Mammary epithelial cell (primary cell): ENCODE measurements at regions of chr16 and their contacts with region 1.

Region 1: DNA sequence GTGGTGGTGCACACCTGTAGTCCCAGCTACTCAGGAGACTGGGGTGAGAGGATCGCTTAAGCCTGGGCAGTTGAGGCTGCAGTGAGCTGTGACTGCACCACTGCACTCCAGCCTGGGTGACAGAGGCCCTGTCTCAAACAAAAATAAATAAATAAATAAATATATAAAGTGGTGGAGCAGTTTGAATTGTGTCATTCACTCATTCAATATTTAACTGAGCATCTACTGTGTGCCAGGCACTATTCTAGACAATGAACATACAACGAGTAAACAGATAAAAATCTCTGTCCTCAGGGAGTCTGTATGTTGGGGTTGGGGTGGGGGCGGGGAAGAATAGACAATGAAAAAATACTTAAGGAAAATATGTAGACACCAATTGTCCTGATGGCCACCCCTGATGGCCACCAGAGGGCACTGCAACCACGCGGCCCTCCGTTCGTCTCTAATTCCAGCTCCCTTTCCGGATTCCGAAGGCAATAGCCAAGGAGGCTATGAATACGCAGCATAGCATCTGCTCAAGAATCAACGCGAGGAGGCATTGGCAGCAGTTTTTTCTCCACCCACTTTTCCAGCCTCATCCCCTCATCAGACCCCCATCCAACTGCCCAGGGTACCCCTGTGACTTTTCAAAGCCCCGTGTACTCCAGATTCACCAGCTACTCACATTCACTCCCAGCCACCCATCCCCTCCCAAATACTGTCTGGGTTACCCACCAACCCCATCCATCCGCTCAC is 21.4 kb downstream of the QPRT start:
- DNase-seq: peak; percentile 77
- H3K4me3 ChIP-seq: no peak overlapping the region
- H3K27ac ChIP-seq: no peak overlapping the region
- H3K4me1 ChIP-seq: no peaks in the 10 kb centered on the region
- H3K27me3 ChIP-seq: no peaks in the 10 kb centered on the region
- CTCF ChIP-seq: peak; percentile 94

Region 2: DNA sequence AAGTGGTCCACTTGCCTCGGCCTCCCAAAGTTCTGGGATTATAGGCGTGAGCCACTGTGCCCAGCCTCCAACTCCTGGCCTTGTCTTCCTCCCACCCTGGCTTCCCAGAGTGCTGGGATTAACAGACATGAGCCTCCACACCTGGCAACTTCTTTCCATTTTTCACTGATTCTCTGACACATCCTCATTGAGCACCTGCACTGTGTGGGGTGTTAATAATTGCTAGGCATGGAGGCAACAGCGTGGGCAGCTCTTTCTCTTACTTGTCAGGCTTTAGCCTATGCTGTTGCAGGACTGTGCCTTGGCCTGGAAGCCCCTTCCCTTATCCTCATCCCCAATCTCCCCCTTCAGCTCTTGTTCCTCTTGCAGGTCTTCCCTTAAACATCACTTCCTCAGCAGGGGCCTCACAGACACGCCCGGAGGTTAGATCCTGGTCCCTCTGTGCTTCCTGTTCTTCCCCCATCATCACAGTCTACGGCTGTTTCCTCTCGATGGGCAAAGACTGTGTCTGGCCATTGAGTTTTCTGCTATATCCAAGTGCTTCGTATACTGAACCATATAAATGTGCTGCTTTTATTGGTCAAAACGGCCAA is 13.6 kb before region 1 on chr16:
- CTCF ChIA-PET with region 1: no interaction called
- dilution Hi-C with region 1: no loop called
- in situ Hi-C with region 1: no loop called
- intact Hi-C with region 1: no loop called
- DNase-seq: no peak
- H3K4me3 ChIP-seq: no peak overlapping the region
- H3K27ac ChIP-seq: no peak overlapping the region
- H3K4me1 ChIP-seq: no peaks in the 10 kb centered on the region
- H3K27me3 ChIP-seq: no peaks in the 10 kb centered on the region
- CTCF ChIP-seq: no peak

Region 3: GRCh38 chr16:29720699-29721098 is 20.3 kb after region 1 on chr16:
- CTCF ChIA-PET with region 1: no interaction called
- dilution Hi-C with region 1: no loop called
- in situ Hi-C with region 1: no loop called
- intact Hi-C with region 1: loop called (anchors 2 kb)
- DNase-seq: no peak
- H3K4me3 ChIP-seq: no peak overlapping the region
- H3K27ac ChIP-seq: no peak overlapping the region
- H3K4me1 ChIP-seq: peaks cover 4% of the 10 kb centered on the region
- H3K27me3 ChIP-seq: no peaks in the 10 kb centered on the region
- CTCF ChIP-seq: no peak

Region 4: GRCh38 chr16:29848420-29849297 is 148.2 kb after region 1 on chr16:
- CTCF ChIA-PET with region 1: interaction called, 11 read pairs
- dilution Hi-C with region 1: no loop called
- in situ Hi-C with region 1: loop called in 1 of 2 experiments (anchors 25 kb)
- intact Hi-C with region 1: loop called (anchors 1 kb)
- DNase-seq: peak; percentile 39
- H3K4me3 ChIP-seq: no peak overlapping the region
- H3K27ac ChIP-seq: no peak overlapping the region
- H3K4me1 ChIP-seq: no peaks in the 10 kb centered on the region
- H3K27me3 ChIP-seq: no peaks in the 10 kb centered on the region
- CTCF ChIP-seq: peak; percentile 86 to 89

Region 5: GRCh38 chr16:29995911-29996772 is 295.7 kb after region 1 on chr16 and contains the start of gene INO80E:
- CTCF ChIA-PET with region 1: no interaction called
- dilution Hi-C with region 1: no loop called
- in situ Hi-C with region 1: no loop called
- intact Hi-C with region 1: loop called (anchors 10 kb)
- DNase-seq: peak; percentile 94
- H3K4me3 ChIP-seq: peak within 1 kb of the TSS; percentile 72 to 96 (median 86)
- H3K27ac ChIP-seq: peak within 1 kb of the TSS; percentile 91
- H3K4me1 ChIP-seq: peaks cover 23% of the 10 kb centered on the region
- H3K27me3 ChIP-seq: no peaks in the 10 kb centered on the region
- CTCF ChIP-seq: no peak
- total RNA-seq, gene INO80E: 27.7 to 62.2 TPM

Region 6: GRCh38 chr16:30010844-30011713 is 310.7 kb after region 1 on chr16 and contains the start of gene DOC2A:
- CTCF ChIA-PET with region 1: no interaction called
- dilution Hi-C with region 1: loop called (anchors 5 kb)
- in situ Hi-C with region 1: loop called in 1 of 2 experiments (anchors 10 kb)
- intact Hi-C with region 1: no loop called
- DNase-seq: no peak
- H3K4me3 ChIP-seq: peak within 1 kb of the TSS; percentile 29 to 38 (median 36)
- H3K27ac ChIP-seq: no peak within 1 kb of the TSS
- H3K4me1 ChIP-seq: peaks cover 7% of the 10 kb centered on the region
- H3K27me3 ChIP-seq: peaks cover 15% of the 10 kb centered on the region
- CTCF ChIP-seq: no peak
- total RNA-seq, gene DOC2A: 0.89 TPM in 1 of 2 donors, not detected in the other

Region 7: DNA sequence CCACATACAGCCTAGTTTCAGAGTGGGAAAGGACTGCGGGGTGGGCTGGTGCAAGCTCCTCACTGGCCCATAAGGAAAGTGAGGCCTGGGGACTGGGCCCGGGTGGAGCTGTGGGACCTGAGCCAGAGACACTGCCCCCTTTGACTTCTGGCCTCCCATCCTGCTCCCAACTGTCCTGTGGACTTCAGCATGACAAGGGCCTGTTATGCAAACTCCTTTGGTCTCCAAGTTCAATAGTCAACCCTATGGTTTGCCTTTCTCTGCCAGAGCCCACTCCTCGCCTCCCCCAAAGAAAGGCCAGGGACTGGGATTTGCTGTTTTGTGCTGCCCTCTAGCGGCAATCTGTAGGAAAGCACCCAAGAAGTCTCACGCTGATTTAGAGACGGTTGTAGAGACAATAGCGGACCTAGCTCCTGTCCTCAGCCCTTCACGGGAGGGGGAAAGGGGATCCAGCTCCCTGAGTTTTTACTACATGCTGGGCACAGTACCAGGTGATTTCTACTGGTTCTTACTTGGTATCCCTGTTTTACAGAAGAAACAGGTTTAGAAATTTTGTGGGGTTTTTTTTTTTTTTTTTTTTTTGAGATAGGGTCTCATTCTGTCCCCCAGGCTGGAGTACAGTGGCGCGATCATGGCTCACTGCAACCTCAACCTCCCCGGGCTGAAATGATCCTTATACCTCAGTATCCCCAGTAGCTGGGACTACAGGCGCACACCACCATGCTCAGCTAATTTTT is 331.8 kb after region 1 on chr16:
- CTCF ChIA-PET with region 1: interaction called, 23 read pairs
- dilution Hi-C with region 1: no loop called
- in situ Hi-C with region 1: loop called in 1 of 2 experiments (anchors 5 kb)
- intact Hi-C with region 1: no loop called
- DNase-seq: peak; percentile 44
- H3K4me3 ChIP-seq: no peak overlapping the region
- H3K27ac ChIP-seq: no peak overlapping the region
- H3K4me1 ChIP-seq: no peaks in the 10 kb centered on the region
- H3K27me3 ChIP-seq: peaks cover 4% of the 10 kb centered on the region
- CTCF ChIP-seq: peak; percentile 68 to 80

Region 8: DNA sequence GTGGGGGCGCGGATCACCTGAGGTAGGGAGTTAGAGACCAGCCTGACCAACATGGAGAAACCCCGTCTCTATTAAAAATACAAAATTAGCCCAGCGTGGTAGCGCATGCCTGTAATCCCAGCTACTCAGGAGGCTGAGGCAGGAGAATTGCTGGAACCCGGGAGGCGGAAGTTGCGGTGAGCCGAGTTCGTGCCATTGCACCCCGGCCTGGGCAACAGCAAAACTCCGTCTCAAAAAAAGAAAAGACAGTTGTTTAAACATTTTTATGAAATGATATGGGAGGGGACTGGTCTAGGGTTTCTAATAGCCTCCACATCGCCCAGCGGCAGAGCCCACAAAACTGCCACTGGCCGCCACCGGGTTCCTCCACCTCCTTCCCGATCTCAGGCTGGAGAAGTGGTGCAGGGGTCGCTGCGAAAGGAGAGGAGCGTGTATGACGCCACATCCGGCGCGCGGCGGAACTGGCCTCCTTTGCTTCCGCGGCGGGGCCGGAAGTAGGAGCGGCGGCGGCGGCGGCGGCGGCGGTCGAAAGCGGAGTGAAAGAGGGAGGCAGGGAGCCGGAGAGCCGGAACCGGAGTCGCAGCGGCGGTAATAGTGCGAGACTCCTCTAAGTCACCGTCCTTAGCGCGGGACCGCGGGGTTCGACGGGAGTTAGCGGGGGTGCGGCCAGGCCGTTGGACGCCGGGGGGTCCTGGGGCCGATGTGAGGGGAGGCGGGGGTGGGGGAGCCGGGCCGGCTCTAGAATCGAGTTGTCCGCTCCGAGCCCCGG is 375.3 kb after region 1 on chr16 and contains the start of gene PPP4C:
- CTCF ChIA-PET with region 1: no interaction called
- dilution Hi-C with region 1: no loop called
- in situ Hi-C with region 1: no loop called
- intact Hi-C with region 1: no loop called
- DNase-seq: peak; percentile 85
- H3K4me3 ChIP-seq: peak within 1 kb of the TSS; percentile 78 to 99 (median 89)
- H3K27ac ChIP-seq: peak within 1 kb of the TSS; percentile 80
- H3K4me1 ChIP-seq: peaks cover 14% of the 10 kb centered on the region
- H3K27me3 ChIP-seq: no peaks in the 10 kb centered on the region
- CTCF ChIP-seq: no peak
- total RNA-seq, gene PPP4C: 125 to 221 TPM